ENCODE measurements at regions of chr14 and their contacts with region 1.

Region 1: DNA sequence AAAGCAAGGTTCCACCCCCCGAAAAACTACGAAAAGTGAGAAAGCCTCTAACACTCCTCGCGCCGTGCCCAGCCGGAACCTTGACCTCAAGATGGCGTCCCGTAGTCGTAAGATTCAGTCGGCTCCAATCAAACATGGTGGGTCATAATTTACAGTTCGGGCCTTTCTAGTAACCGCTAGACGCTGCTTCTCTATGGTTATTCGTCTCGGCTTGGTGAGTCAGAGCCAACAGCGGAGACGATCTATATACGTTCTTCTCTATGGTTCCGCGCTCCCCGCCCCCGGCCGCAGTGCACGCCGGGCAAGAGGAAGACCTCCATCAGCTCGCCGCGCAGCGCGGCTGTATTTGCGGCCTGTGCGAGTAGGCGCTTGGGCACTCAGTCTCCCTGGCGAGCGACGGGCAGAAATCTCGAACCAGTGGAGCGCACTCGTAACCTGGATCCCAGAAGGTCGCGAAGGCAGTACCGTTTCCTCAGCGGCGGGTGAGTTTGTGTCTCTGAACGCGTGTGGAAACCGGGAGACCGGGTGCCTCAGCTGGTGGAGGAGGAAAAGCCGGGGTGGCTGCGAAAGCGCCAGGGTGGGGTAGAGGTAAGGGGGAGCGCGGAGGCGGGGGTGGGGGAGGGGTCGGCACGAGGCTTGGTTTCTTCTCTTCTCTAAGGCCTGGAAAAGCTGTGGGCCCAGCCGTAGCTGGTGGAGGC is at the start of gene RBM25:
- DNase-seq: peak; percentile 98 to 99
- ATAC-seq: peak; percentile 94 to 98
- H3K4me3 ChIP-seq: peak within 1 kb of the TSS; percentile 75
- H3K27ac ChIP-seq: peak within 1 kb of the TSS; percentile 88 to 91
- H3K4me1 ChIP-seq: peaks cover 20% of the 10 kb centered on the region; the same call in 2 of the 3 replicates
- CTCF ChIP-seq: no peak
- EP300 ChIP-seq: no peak
- POLR2A ChIP-seq: peak; percentile 97
- RAD21 ChIP-seq: peak; percentile 16 to 29; a peak in 2 of 5 replicates
- polyA plus RNA-seq, gene RBM25: 58.2 and 65.1 TPM in 2 replicates

Region 2: DNA sequence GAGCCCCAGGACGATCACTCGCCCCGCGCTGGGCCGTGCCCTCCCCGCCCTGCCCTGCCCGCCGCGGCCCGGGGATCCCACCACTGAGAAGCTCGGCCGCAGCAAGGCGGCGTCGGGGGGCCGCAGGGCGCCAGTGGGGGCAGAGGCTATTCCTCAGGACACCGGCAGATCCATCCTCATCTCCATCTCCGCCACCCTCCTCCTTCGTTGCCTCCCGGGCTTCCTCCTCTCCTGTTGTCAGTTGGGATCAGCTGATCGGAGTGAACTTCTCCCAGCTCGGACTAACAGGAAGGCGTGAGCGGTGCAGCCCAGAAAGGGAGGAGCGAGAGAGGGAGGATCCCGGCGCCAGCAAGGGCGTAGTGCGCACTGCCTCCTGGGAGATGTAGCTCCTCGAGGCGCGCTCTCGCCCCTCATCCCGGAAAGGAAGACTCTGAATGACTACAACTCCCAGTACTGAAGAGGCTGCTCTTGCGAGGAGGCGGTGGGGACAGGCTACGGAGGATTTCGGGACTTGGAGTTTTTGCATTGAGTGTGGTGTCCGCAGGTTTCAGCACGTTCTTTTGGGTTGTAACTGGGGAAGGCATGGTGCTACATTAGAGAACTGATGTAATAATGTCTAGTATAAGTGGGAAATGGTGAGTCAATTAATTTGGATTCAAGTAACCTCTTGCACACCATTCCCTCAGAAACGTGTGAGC is 31.4 kb before region 1 on chr14 and contains the start of gene ZFYVE1:
- CTCF ChIA-PET with region 1: interaction called, 3 read pairs
- POLR2A ChIA-PET with region 1: interaction called, 38 read pairs
- DNase-seq: peak; percentile 98
- ATAC-seq: peak; percentile 99 to 100
- H3K4me3 ChIP-seq: peak within 1 kb of the TSS; percentile 65
- H3K27ac ChIP-seq: peak within 1 kb of the TSS; percentile 66 to 89
- H3K4me1 ChIP-seq: peaks cover 10% of the 10 kb centered on the region; the same call in 2 of the 3 replicates
- CTCF ChIP-seq: no peak
- EP300 ChIP-seq: no peak
- POLR2A ChIP-seq: peak; percentile 61
- RAD21 ChIP-seq: no peak
- polyA plus RNA-seq, gene ZFYVE1: 9.3 and 9.4 TPM in 2 replicates

Region 3: DNA sequence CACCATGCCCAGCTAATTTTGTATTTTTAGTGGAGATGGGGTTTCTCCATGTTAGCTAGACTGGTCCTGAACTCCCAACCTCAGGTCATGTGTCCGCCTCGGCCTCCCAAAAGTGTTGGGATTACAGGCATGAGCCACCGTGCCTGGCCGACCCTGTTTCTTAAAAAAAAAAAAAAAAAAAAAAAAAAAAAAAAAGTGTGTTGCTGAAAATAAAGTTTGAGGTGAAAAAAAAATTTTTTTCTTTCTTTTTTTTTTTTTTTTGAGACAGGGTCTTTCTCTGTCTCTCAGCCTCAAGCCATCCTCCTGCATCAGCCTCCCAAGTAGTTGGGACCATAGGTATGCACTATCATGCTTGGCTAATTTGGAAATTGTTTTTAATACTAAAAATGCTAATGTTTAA is 11.2 kb after region 1 on chr14:
- CTCF ChIA-PET with region 1: no interaction called
- POLR2A ChIA-PET with region 1: interaction called, 16 read pairs
- DNase-seq: no peak
- ATAC-seq: no peak
- H3K4me3 ChIP-seq: no peak overlapping the region
- H3K27ac ChIP-seq: no peak overlapping the region
- H3K4me1 ChIP-seq: no peaks in the 10 kb centered on the region
- CTCF ChIP-seq: no peak
- EP300 ChIP-seq: no peak
- POLR2A ChIP-seq: no peak
- RAD21 ChIP-seq: no peak

Region 4: DNA sequence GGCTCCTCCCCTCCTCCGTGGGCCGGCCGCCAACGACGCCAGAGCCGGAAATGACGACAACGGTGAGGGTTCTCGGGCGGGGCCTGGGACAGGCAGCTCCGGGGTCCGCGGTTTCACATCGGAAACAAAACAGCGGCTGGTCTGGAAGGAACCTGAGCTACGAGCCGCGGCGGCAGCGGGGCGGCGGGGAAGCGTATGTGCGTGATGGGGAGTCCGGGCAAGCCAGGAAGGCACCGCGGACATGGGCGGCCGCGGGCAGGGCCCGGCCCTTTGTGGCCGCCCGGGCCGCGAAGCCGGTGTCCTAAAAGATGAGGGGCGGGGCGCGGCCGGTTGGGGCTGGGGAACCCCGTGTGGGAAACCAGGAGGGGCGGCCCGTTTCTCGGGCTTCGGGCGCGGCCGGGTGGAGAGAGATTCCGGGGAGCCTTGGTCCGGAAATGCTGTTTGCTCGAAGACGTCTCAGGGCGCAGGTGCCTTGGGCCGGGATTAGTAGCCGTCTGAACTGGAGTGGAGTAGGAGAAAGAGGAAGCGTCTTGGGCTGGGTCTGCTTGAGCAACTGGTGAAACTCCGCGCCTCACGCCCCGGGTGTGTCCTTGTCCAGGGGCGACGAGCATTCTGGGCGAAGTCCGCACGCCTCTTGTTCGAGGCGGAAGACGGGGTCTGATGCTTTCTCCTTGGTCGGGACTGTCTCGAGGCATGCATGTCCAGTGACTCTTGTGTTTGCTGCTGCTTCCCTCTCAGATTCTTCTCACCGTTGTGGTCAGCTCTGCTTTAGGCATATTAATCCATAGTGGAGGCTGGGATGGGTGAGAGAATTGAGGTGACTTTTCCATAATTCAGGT is 78.2 kb after region 1 on chr14 and contains the start of gene PSEN1:
- CTCF ChIA-PET with region 1: interaction called, 3 read pairs
- POLR2A ChIA-PET with region 1: interaction called, 14 read pairs
- DNase-seq: peak; percentile 89 to 90
- ATAC-seq: peak; percentile 88 to 91
- H3K4me3 ChIP-seq: peak within 1 kb of the TSS; percentile 87
- H3K27ac ChIP-seq: peak within 1 kb of the TSS; percentile 90 to 91
- H3K4me1 ChIP-seq: peaks cover 7% of the 10 kb centered on the region; the same call in 2 of the 3 replicates
- CTCF ChIP-seq: no peak
- EP300 ChIP-seq: no peak
- POLR2A ChIP-seq: peak; percentile 65
- RAD21 ChIP-seq: no peak
- polyA plus RNA-seq, gene PSEN1: 21.6 and 53.0 TPM in 2 replicates

Region 5: GRCh38 chr14:73568381-73568781 is 510.0 kb after region 1 on chr14:
- CTCF ChIA-PET with region 1: no interaction called
- POLR2A ChIA-PET with region 1: interaction called, 10 read pairs
- DNase-seq: no peak
- ATAC-seq: no peak
- H3K4me3 ChIP-seq: peak overlapping the region; percentile 55
- H3K27ac ChIP-seq: peak overlapping the region; percentile 94 to 98
- H3K4me1 ChIP-seq: peaks cover 21% of the 10 kb centered on the region
- CTCF ChIP-seq: no peak
- EP300 ChIP-seq: no peak
- POLR2A ChIP-seq: no peak
- RAD21 ChIP-seq: no peak

Measured in A549 (cell line).